ENCODE measurements at regions of chr17 and their contacts with region 1.

Region 1: GRCh38 chr17:80364216-80364618 is 50.8 kb upstream of the ENDOV start:
- DNase-seq: peak; percentile 21
- H3K4me3 Mint-ChIP-seq: no peak overlapping the region
- H3K27ac Mint-ChIP-seq: no peak overlapping the region
- H3K4me1 Mint-ChIP-seq: no peaks in the 10 kb centered on the region
- H3K27me3 Mint-ChIP-seq: no peaks in the 10 kb centered on the region
- CTCF ChIP-seq: peak; percentile 37

Region 2: DNA sequence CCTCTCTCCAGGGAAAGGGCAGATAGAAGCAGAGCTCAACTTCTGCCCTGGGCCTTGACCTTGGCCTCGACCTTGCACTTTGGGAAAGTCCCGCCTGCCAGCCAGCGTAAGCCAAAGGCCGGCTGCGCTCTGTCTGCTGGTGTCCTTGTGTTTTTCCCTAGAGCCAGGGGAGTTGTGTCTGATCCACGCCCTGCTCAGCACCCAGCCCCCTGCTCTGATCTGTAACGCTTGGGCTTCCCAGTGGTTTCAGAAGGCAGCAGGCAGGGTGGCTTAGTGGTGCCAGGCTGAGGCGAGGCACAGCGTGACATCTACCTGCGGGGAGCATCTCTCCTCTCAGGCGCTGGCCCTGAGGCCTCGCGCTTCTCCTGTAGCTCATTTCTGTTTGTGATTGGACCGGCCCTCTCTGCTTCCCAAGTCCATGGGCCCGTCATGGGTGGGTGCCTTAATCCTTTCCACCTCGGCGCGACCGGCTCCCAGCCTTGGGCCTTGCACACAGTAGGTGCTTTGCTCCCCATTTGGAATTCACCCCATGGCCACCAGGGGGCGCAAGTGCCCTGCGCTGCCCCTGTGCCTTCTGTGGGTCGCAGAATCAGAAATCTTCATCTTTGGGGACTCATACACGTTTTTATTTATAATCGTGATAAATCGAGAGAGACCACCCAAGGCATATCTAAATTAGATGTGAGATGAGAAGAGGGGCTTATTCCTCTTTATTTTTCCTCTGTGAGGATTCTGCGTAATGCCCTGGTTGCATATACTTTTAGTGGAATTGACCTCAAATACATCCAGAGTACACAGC is 168.3 kb before region 1 on chr17:
- CTCF ChIA-PET with region 1: interaction called, 4 read pairs
- POLR2A ChIA-PET with region 1: no interaction called
- intact Hi-C with region 1: loop called (anchors 2 kb)
- DNase-seq: peak; percentile 26
- H3K4me3 Mint-ChIP-seq: no peak overlapping the region
- H3K27ac Mint-ChIP-seq: no peak overlapping the region
- H3K4me1 Mint-ChIP-seq: no peaks in the 10 kb centered on the region
- H3K27me3 Mint-ChIP-seq: no peaks in the 10 kb centered on the region
- CTCF ChIP-seq: peak; percentile 93

Region 3: GRCh38 chr17:80414803-80415625 is 50.8 kb after region 1 on chr17 and contains the start of gene ENDOV:
- CTCF ChIA-PET with region 1: no interaction called
- POLR2A ChIA-PET with region 1: no interaction called
- intact Hi-C with region 1: no loop called
- DNase-seq: peak; percentile 92
- H3K4me3 Mint-ChIP-seq: peak within 1 kb of the TSS; percentile 72
- H3K27ac Mint-ChIP-seq: peak within 1 kb of the TSS; percentile 96
- H3K4me1 Mint-ChIP-seq: peaks cover 30% of the 10 kb centered on the region
- H3K27me3 Mint-ChIP-seq: no peaks in the 10 kb centered on the region
- CTCF ChIP-seq: no peak
- total RNA-seq, gene ENDOV: 28.0 and 34.4 TPM in 2 replicates

Measured in MCF 10A (cell line).